ENCODE measurements at regions of chr22 and their contacts with region 1.

Region 1: DNA sequence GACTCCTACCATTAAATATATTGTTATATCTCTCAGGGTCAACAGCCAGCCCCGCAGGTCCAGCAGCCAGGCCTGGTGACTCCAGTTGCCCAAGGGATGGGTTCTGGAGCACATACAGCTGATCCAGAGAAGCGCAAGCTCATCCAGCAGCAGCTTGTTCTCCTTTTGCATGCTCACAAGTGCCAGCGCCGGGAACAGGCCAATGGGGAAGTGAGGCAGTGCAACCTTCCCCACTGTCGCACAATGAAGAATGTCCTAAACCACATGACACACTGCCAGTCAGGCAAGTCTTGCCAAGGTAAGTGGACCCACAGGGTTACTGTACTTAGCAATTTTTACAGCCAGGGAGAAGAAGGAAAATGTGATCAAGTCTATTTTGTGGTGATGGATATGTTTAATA is 35.1 kb downstream of the EP300 start:
- H3K4me3 Mint-ChIP-seq: no peak overlapping the region
- H3K27ac Mint-ChIP-seq: peak overlapping the region; percentile 59
- H3K4me1 Mint-ChIP-seq: peaks cover 30% of the 10 kb centered on the region
- H3K27me3 Mint-ChIP-seq: no peaks in the 10 kb centered on the region

Region 2: GRCh38 chr22:40922484-40923303 is 204.8 kb before region 1 on chr22:
- intact Hi-C with region 1: loop called (anchors 5 kb)
- H3K4me3 Mint-ChIP-seq: peak overlapping the region; percentile 2
- H3K27ac Mint-ChIP-seq: peak overlapping the region; percentile 77
- H3K4me1 Mint-ChIP-seq: peaks cover 5% of the 10 kb centered on the region
- H3K27me3 Mint-ChIP-seq: no peaks in the 10 kb centered on the region